Left cardiac atrium (tissue), 4 donors: ENCODE measurements at regions of chr13 and their contacts with region 1.

Region 1: DNA sequence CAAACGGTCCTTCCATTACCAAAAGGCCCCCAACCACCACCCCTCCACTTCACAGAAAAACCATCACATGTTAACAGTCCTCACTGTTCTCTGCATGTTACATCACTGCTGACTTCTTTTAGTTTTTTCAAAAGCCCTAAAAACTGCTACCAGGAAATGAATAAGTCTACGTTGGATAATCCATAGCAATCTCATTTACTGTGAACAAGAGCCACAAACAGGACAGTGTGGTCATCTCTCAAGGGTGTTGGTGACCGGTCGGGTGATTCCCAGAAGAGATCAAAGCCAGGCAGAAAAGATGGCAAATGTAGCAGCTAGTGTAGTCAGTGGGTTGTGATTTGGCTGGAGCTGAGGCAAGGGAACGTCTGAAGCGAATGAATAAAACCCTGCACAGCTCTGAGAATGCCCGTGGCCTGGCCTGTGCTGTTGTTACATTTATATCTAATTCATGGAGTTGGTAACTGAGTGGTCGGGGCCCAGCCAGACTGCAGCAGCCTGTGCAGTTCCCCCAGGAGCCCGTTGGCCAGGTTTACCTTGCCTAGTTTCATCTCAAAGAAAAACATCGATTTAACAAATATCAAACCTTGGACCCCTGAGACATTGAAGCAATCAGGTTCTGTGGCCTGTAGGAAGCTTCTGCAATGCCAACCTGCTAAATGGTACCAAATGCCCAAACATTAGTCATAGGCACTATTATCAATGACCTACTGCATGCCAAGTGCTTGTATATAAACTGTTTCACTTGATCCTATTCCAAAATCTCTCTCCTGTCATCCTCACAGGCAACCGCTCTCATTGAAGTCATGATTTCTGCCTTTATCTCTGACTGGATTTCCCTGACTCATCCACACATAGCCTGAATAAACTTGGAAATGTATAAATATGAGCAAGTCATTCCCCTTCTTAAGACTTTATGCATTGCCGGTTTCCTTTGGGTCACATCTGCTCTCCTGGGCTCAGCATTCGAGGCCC is 153.8 kb upstream of the SERP2 start:
- DNase-seq: no peak
- ATAC-seq: peak; percentile 38 to 67

Region 2: DNA sequence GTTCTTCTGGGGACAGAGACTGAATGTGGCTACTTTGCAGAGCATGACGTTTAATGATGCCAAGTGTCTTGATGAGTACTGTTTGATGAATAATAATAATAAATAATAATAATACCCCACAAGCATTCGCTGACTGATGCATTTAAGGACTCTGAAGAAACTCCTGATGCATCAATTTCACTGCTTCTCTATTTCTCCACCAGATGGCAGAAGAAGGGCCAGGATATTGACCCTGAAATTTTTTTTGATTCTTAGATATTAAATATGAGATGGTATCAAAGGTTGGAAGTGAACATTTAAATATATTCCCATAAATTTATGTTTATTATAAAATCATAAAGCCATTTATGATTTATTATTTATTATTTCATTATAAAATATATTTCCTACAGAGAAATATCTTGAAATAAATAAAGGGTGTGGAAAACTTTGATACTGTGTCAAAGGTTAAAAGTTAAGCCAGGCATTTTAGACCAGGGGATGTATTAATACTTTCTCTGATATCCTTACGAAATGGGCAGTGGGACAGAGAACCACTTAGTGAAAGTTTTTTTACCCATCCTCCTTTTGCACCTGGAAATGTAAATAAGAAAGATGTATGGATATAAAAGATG is 169.3 kb before region 1 on chr13:
- intact Hi-C with region 1: no loop called
- DNase-seq: no peak
- ATAC-seq: no peak

Region 3: GRCh38 chr13:44155422-44156293 is 64.2 kb before region 1 on chr13:
- intact Hi-C with region 1: loop called in 1 of 2 experiments (anchors 10 kb)
- DNase-seq: peak; percentile 66
- ATAC-seq: peak; percentile 83 to 84